B cell (primary cell): ENCODE measurements at regions of chr11 and their contacts with region 1.

Region 1: DNA sequence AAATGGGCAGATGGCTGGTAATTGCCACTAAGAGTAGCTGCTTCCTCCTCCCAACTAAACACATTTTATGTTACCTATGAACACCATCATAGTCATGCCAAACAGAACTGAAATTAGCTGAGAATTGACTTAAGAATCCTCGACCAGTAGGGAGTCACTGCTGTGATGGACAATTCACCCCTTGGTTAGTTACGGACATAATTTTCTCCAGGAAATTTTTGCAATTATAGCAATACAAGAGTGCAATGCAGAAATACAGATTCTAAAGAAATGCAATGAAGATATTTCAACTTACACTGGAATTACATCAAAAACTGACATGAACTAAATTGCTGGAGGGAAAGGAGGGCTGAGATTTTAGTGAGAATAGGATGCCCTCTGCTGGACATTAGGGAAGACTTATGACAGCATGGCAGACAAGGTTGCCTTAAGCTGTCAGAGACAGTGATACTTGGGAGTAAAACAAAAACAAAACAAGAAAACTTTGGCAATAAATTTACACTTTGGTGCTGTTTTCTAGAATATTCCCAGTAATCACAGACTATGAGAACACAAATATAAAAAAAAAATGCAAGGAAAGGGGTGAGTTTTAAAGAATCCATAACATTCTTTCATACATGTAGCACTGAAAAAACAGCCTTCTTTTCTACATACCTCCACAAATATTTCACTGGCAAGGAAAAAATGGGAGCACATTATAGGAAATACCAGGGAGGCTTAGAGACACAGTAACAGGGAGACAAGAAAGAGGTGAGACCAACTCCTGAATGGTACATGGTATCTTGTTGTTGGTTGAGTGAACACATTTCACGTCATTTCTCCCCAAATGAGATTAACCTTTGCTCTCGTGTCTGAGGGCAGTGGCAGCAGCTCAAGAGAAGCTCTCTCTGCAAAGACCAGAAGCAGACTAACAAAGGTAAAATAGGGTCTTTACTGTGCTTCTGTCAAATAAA is 11.2 kb upstream of the PPP2R1B start:
- DNase-seq: peak; percentile 79
- ATAC-seq: peak; percentile 61
- H3K4me3 ChIP-seq: peak overlapping the region in 1 of 5 experiments; percentile 32
- H3K4me3 Mint-ChIP-seq: peak overlapping the region; percentile 82
- H3K27ac ChIP-seq: peak overlapping the region; percentile 63 to 76
- H3K27ac Mint-ChIP-seq: peak overlapping the region; percentile 91
- H3K4me1 ChIP-seq: peaks cover 17 to 21% of the 10 kb centered on the region in 2 donors
- H3K4me1 Mint-ChIP-seq: peaks cover 23% of the 10 kb centered on the region
- H3K27me3 ChIP-seq: no peaks in the 10 kb centered on the region
- H3K27me3 Mint-ChIP-seq: no peaks in the 10 kb centered on the region
- CTCF ChIP-seq: peak; percentile 81

Region 2: GRCh38 chr11:111565114-111565720 is 212.2 kb before region 1 on chr11:
- CTCF ChIA-PET with region 1: interaction called, 44 read pairs
- POLR2A ChIA-PET with region 1: no interaction called
- intact Hi-C with region 1: loop called (anchors 1 kb)
- DNase-seq: peak; percentile 72
- ATAC-seq: no peak
- H3K4me3 ChIP-seq: no peak overlapping the region
- H3K4me3 Mint-ChIP-seq: no peak overlapping the region
- H3K27ac ChIP-seq: no peak overlapping the region
- H3K27ac Mint-ChIP-seq: no peak overlapping the region
- H3K4me1 ChIP-seq: no peaks in the 10 kb centered on the region
- H3K4me1 Mint-ChIP-seq: no peaks in the 10 kb centered on the region
- H3K27me3 ChIP-seq: no peaks in the 10 kb centered on the region
- H3K27me3 Mint-ChIP-seq: peaks cover 8% of the 10 kb centered on the region
- CTCF ChIP-seq: peak; percentile 94

Region 3: GRCh38 chr11:111586388-111586831 is 191.0 kb before region 1 on chr11:
- CTCF ChIA-PET with region 1: interaction called, 151 read pairs
- POLR2A ChIA-PET with region 1: no interaction called
- intact Hi-C with region 1: loop called (anchors 1 kb)
- DNase-seq: peak; percentile 75
- ATAC-seq: peak; percentile 57
- H3K4me3 ChIP-seq: no peak overlapping the region
- H3K4me3 Mint-ChIP-seq: no peak overlapping the region
- H3K27ac ChIP-seq: no peak overlapping the region
- H3K27ac Mint-ChIP-seq: no peak overlapping the region
- H3K4me1 ChIP-seq: no peaks in the 10 kb centered on the region
- H3K4me1 Mint-ChIP-seq: peaks cover 5% of the 10 kb centered on the region
- H3K27me3 ChIP-seq: no peaks in the 10 kb centered on the region
- H3K27me3 Mint-ChIP-seq: no peaks in the 10 kb centered on the region
- CTCF ChIP-seq: peak; percentile 85

Region 4: DNA sequence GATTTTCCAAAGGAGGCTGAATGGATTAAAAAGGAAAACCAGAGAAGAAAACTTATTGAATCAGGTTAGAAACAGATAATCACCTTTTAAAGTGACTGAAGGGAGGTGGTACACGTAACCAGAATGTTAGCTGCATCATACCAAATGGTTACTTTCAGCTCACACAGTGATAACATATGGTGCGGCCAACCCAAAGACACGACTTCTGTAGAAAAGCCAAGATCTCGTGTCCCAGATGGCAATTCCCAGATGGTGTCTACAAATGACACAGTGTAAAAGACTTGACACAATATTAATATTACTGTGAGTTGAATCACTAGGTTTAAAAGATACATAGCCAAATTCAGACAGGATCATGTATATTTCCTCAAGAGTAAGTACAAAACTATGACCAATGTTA is 16.3 kb before region 1 on chr11:
- CTCF ChIA-PET with region 1: interaction called, 114 read pairs
- POLR2A ChIA-PET with region 1: interaction called, 6 read pairs
- intact Hi-C with region 1: loop called (anchors 1 kb)
- DNase-seq: no peak
- ATAC-seq: no peak
- H3K4me3 ChIP-seq: no peak overlapping the region
- H3K4me3 Mint-ChIP-seq: no peak overlapping the region
- H3K27ac ChIP-seq: no peak overlapping the region
- H3K27ac Mint-ChIP-seq: no peak overlapping the region
- H3K4me1 ChIP-seq: peaks cover 0 to 10% of the 10 kb centered on the region in 2 donors
- H3K4me1 Mint-ChIP-seq: peaks cover 26% of the 10 kb centered on the region
- H3K27me3 ChIP-seq: no peaks in the 10 kb centered on the region
- H3K27me3 Mint-ChIP-seq: no peaks in the 10 kb centered on the region
- CTCF ChIP-seq: no peak

Region 5: GRCh38 chr11:111766093-111766833 is 11.1 kb before region 1 on chr11 and contains the start of gene PPP2R1B:
- CTCF ChIA-PET with region 1: interaction called, 114 read pairs
- POLR2A ChIA-PET with region 1: interaction called, 6 read pairs
- intact Hi-C with region 1: loop called (anchors 1 kb)
- DNase-seq: peak; percentile 88
- ATAC-seq: peak; percentile 97
- H3K4me3 ChIP-seq: peak within 1 kb of the TSS; percentile 74 to 97 (median 90)
- H3K4me3 Mint-ChIP-seq: peak within 1 kb of the TSS; percentile 100
- H3K27ac ChIP-seq: peak within 1 kb of the TSS; percentile 53 to 77
- H3K27ac Mint-ChIP-seq: peak within 1 kb of the TSS; percentile 97
- H3K4me1 ChIP-seq: peaks cover 9 to 16% of the 10 kb centered on the region in 2 donors
- H3K4me1 Mint-ChIP-seq: peaks cover 37% of the 10 kb centered on the region
- H3K27me3 ChIP-seq: no peaks in the 10 kb centered on the region
- H3K27me3 Mint-ChIP-seq: no peaks in the 10 kb centered on the region
- CTCF ChIP-seq: no peak
- total RNA-seq, gene PPP2R1B: 35.6 and 37.0 TPM in 2 replicates

Region 6: DNA sequence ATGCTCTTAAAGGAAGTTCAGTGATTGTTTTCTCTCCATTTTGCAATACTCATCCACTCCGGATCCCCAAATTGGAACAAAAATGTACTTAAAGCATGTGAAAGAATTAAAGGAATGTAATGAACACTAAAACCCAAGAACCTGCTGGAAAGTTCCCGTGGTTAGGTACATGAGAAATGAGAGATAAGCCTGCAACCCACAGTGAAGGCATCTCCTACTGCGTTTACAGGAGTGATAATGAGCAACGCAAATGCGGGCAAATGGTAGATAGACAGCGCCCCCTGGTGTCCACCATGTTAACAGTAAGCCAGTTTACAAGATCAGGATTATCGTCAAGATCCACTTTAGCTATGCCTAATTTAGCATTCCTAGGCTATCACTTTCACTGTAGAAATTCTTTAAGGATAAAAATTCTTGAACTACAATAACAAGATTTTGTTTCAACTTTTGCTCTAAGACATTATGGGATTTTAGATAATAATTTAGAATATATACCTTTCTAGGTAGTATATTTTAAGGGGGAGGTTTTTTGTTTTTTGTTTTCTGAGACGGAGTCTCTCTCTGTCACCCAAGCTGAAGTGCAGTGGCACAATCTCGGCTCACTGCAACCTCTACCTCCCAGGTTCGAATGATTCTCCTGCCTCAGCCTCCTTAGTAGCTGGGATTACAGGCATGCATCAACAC is 64.1 kb after region 1 on chr11:
- CTCF ChIA-PET with region 1: interaction called, 49 read pairs
- POLR2A ChIA-PET with region 1: no interaction called
- intact Hi-C with region 1: loop called (anchors 1 kb)
- DNase-seq: peak; percentile 86
- ATAC-seq: peak; percentile 86
- H3K4me3 ChIP-seq: no peak overlapping the region
- H3K4me3 Mint-ChIP-seq: no peak overlapping the region
- H3K27ac ChIP-seq: no peak overlapping the region
- H3K27ac Mint-ChIP-seq: no peak overlapping the region
- H3K4me1 ChIP-seq: peaks cover 3% of the 10 kb centered on the region in 2 donors
- H3K4me1 Mint-ChIP-seq: peaks cover 6% of the 10 kb centered on the region
- H3K27me3 ChIP-seq: no peaks in the 10 kb centered on the region
- H3K27me3 Mint-ChIP-seq: no peaks in the 10 kb centered on the region
- CTCF ChIP-seq: peak; percentile 92

Region 7: DNA sequence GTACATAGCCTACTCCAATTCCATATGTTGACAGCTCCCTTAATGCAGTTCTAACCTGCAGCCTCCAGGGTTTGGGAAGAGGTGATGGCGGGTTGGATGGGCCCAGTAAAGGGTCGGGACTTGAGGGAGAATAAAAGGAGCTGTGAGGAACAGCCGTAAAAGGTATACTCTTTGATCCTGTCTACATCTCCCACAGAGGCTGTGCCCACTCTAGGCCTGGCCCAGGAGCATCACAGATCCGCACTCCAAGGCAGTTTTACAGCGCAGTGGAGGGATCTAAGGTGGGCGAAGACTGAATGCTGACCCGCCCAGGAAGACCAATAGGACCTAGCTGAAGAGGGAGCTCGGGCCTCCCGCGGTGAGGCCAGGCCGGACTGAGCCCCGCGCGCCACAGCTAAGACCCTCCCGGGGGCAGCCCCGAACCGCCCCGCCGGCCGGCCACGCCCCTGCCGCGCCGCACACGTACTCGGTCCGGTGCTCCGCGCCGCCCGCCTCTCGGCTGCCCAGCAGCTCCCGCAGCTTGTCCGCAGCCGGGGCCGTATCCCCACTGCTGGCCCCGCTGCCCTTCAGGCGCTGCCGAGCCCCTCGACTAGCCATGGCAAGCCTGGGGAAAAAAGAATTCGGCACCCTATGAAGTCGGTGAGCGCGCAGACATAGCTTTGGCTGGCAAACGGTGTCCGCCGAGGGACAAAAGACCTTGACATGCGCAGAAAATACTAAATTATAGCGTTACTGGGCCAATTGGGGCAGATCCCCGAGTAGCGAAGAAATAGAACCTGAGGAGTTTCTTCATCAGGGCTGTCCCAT is 93.7 kb after region 1 on chr11 and contains the start of gene ALG9:
- CTCF ChIA-PET with region 1: interaction called, 10 read pairs
- POLR2A ChIA-PET with region 1: interaction called, 5 read pairs
- intact Hi-C with region 1: no loop called
- DNase-seq: peak; percentile 94
- ATAC-seq: peak; percentile 94
- H3K4me3 ChIP-seq: peak within 1 kb of the TSS; percentile 62 to 81 (median 80)
- H3K4me3 Mint-ChIP-seq: peak within 1 kb of the TSS; percentile 94
- H3K27ac ChIP-seq: peak within 1 kb of the TSS; percentile 72 to 91
- H3K27ac Mint-ChIP-seq: peak within 1 kb of the TSS; percentile 94
- H3K4me1 ChIP-seq: peaks cover 13 to 14% of the 10 kb centered on the region in 2 donors
- H3K4me1 Mint-ChIP-seq: peaks cover 17% of the 10 kb centered on the region
- H3K27me3 ChIP-seq: no peaks in the 10 kb centered on the region
- H3K27me3 Mint-ChIP-seq: no peaks in the 10 kb centered on the region
- CTCF ChIP-seq: no peak
- total RNA-seq, gene ALG9: 23.9 and 29.9 TPM in 2 replicates